Activated CD4-positive, alpha-beta T cell treated with anti-CD3 and anti-CD28 coated beads for 36 hours (primary cell): ENCODE measurements at regions of chr9 and their contacts with region 1.

Region 1: DNA sequence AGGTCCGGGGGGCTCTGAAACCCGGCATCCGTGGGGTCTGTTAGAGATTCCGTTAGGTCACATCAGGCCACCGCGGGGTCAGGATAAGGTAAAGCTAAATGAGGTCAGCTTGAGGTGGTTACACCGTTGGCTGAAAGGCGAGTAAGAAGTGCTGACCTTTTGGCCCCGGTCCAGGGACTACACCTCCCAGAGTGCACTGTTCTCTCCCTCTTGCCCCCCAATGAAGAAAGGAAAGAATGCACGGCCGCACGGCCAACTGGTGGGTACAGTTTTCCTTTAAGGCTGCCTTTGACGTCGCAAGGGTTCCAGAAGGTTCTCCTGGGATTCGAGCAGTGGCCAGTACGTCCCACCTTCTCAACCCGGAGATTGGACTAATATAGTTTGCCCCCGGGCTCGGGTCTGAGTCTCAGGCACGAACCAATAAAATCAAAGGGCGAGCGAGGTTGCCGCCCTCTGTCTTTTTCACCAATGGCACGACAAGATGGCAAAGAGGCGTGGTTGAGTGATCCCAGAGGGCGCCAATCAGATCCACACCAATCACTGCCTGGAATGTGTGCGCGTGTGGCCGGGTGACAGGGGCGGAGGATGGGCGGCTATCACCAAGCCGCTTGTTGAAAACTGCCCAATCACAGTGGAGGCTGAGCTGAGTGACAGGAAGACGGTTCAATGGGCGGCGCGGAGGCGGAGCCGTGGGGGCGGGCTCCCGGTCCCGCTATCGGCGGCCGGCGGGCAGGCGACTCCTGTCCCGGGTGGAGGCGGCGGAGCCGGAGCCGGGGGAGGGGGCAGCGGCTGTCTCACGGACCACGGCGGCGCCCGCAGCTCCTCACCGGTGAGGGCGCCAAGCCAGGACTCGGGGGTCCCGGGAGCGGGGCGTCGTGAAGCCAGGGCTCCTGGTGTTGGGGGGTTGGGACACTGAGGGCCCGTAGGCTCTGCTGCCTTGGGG is at the start of gene DNAJB5:
- DNase-seq: peak; percentile 98
- ATAC-seq: peak; percentile 88
- H3K4me3 Mint-ChIP-seq: peak within 1 kb of the TSS; percentile 78
- H3K27ac Mint-ChIP-seq: peak within 1 kb of the TSS; percentile 94
- H3K4me1 Mint-ChIP-seq: peaks cover 82% of the 10 kb centered on the region
- H3K27me3 Mint-ChIP-seq: no peaks in the 10 kb centered on the region
- total RNA-seq, gene DNAJB5: 10.3 to 11.3 TPM

Region 2: DNA sequence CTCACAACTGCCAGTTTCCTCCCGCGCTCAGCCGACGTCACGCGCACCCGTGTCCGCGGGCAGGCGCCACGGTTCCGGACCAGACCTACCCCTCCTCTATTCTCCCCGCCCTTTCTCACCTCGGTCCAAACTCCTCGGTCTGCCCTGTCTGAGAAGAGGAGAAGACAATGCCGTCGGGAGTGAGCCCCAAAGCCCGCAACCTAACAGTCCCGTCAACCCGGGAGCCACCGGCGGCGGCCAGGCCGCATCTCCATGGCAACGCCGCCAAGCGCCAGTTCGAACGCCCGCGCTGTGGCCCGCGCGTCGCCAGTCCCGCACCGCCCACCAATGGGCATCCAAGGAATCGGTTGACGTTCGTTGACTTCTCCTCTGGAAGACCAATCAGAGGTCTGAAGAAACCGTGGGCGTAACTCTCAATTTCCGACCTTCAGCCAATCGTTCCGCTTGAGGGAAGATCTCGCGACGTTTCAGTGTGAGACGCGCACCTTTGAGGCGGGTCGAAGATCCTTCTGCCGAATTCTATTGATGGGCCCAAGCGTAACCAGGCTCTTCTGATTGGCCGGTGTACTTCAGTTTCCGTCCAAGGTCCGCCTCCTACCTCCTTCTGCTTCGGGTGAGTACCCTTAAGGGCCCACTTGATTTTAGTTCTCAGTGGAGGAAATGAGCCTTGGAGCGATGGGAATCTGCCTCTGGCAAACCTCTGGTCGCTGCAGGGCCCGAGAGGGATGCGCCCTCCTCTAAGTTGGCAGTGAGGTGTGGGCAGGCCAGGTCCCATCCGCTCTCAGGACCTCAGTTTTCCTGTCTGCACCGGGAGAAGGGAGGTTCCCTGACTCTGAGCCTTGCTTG is 660.1 kb before region 1 on chr9 and contains the starts of genes KIF24 and NUDT2:
- CTCF ChIA-PET with region 1: no interaction called
- POLR2A ChIA-PET with region 1: no interaction called
- intact Hi-C with region 1: loop called in 1 of 2 experiments (anchors 2 kb)
- DNase-seq: peak; percentile 98
- ATAC-seq: peak; percentile 97
- H3K4me3 Mint-ChIP-seq: peak within 1 kb of the TSS; percentile 95
- H3K27ac Mint-ChIP-seq: peak within 1 kb of the TSS; percentile 98
- H3K4me1 Mint-ChIP-seq: peaks cover 32% of the 10 kb centered on the region
- H3K27me3 Mint-ChIP-seq: no peaks in the 10 kb centered on the region
- total RNA-seq, gene KIF24: 5.9 to 7.7 TPM
- total RNA-seq, gene NUDT2: 14.9 to 22.9 TPM

Region 3: GRCh38 chr9:34646211-34647083 is 342.8 kb before region 1 on chr9 and contains the start of gene GALT:
- CTCF ChIA-PET with region 1: no interaction called
- POLR2A ChIA-PET with region 1: no interaction called
- intact Hi-C with region 1: loop called in 1 of 2 experiments (anchors 5 kb)
- DNase-seq: peak; percentile 99
- ATAC-seq: peak; percentile 90
- H3K4me3 Mint-ChIP-seq: peak within 1 kb of the TSS; percentile 91
- H3K27ac Mint-ChIP-seq: peak within 1 kb of the TSS; percentile 89
- H3K4me1 Mint-ChIP-seq: peaks cover 26% of the 10 kb centered on the region
- H3K27me3 Mint-ChIP-seq: no peaks in the 10 kb centered on the region
- total RNA-seq, gene GALT: 45.1 to 53.9 TPM

Region 4: DNA sequence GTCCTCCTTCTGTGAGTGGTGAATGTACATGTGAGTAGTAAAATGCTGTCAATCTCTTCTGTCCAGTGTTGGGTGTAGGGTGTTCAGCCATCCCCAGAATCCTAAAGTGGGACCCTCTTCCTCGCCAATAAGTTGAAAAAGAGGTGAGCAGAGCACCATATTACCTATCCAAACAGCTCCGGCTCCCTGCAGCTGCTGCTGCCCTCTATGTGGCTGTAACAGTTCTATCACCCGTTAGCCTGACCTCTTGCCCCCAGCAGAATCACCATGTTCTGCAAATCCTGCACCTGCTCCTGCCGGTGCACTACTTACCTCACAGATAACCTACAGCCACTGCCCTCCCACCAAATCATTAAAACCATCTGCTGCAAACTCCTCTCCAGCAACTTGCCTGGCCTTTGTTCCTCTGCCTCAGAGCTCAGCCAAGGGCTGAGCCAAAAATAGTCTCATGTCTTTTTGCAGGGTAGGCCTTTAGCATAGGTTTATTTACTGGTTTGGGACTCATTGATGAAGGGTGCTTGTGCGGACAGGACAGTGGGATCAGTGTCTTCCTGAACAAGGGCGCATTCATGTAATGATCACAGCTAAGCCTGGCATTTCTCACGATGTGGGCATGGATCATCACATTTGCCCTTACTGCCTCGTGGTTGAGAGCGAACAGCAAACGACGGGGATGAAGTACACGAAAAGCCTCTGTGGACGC is 229.7 kb before region 1 on chr9:
- CTCF ChIA-PET with region 1: interaction called, 4 read pairs
- POLR2A ChIA-PET with region 1: no interaction called
- intact Hi-C with region 1: loop called in 1 of 2 experiments (anchors 1 kb)
- DNase-seq: no peak
- ATAC-seq: no peak
- H3K4me3 Mint-ChIP-seq: no peak overlapping the region
- H3K27ac Mint-ChIP-seq: no peak overlapping the region
- H3K4me1 Mint-ChIP-seq: peaks cover 2% of the 10 kb centered on the region
- H3K27me3 Mint-ChIP-seq: peaks cover 22% of the 10 kb centered on the region

Region 5: GRCh38 chr9:35051069-35051967 is 62.0 kb after region 1 on chr9:
- CTCF ChIA-PET with region 1: interaction called, 10 read pairs
- POLR2A ChIA-PET with region 1: interaction called, 4 read pairs
- intact Hi-C with region 1: no loop called
- DNase-seq: peak; percentile 76
- ATAC-seq: peak; percentile 87
- H3K4me3 Mint-ChIP-seq: no peak overlapping the region
- H3K27ac Mint-ChIP-seq: peak overlapping the region; percentile 15
- H3K4me1 Mint-ChIP-seq: no peaks in the 10 kb centered on the region
- H3K27me3 Mint-ChIP-seq: no peaks in the 10 kb centered on the region

Region 6: DNA sequence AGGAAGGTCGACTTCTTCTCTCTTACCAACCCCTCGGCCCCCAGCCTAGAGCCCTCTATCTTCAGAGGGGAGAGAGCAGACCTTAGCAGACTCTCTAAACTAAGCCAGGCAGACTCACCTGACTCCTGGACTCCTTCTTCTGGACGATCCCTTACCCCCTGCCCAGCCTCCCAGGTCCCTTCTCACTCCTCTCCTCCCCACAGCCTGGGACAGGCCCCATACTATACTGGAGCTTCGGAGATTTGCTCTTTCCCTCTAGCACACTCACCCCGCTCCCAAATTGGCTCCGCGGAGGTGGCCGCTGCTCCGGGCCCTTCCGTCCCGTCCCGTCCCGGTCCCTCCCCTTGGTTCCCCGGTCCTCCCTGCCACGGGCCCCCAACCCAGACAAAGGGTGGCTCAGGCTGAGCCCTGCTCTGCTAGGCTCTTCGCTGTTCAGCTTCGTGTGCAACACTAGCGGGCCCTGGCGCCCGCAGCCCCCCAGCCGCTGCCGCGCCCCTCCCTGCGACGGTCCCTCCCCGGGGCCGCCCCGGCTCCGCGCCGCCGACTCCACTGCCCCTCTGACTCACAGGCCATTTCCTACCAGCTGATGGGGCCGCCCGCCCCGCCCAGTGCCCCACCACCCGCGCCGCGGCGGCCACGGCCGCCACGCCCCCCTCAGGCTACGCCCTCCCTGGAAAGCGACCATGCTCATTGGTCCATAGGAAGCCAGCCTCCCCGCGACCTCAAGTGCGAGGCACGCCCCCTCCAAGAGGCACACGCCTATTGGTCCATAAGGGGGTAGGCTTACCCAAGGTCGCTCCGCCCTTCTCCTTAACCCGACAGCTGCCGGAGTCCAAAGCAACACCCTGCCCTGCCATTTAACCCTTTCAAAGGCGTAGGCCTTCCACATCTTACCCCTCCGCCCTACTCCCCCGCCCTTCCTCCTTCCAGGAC is 122.0 kb after region 1 on chr9:
- CTCF ChIA-PET with region 1: no interaction called
- POLR2A ChIA-PET with region 1: no interaction called
- intact Hi-C with region 1: loop called (anchors 1 kb)
- DNase-seq: peak; percentile 98
- ATAC-seq: peak; percentile 82
- H3K4me3 Mint-ChIP-seq: peak overlapping the region; percentile 63
- H3K27ac Mint-ChIP-seq: peak overlapping the region; percentile 90
- H3K4me1 Mint-ChIP-seq: peaks cover 48% of the 10 kb centered on the region
- H3K27me3 Mint-ChIP-seq: no peaks in the 10 kb centered on the region